Activated CD4-positive, alpha-beta T cell treated with anti-CD3 and anti-CD28 coated beads for 36 hours (primary cell): ENCODE measurements at regions of chr10 and their contacts with region 1.

Region 1: DNA sequence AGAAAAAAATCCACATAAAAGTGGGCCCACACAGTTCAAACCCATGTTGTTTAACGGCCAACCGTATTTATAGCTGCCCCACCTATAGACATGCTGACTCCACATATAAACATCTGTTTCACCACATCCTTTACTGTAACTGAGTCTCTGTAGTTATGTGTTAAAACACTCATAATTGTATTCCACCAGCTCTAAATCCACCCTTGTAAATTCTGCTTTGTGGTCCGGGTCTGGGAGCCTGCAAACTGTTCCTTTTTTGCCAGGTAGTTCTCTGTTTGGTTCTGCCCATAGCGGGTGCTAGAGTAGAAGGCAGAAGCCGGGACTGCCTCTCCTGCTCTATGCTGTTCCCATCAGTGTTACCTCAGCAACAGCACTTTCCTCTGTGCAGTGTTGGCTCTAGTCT is 20.2 kb upstream of the FHIP2A start:
- DNase-seq: peak; percentile 16
- ATAC-seq: peak; percentile 90
- H3K4me3 Mint-ChIP-seq: no peak overlapping the region
- H3K27ac Mint-ChIP-seq: peak overlapping the region; percentile 38
- H3K4me1 Mint-ChIP-seq: peaks cover 17% of the 10 kb centered on the region
- H3K27me3 Mint-ChIP-seq: no peaks in the 10 kb centered on the region

Region 2: GRCh38 chr10:114458955-114459354 is 342.5 kb before region 1 on chr10:
- CTCF ChIA-PET with region 1: no interaction called
- POLR2A ChIA-PET with region 1: no interaction called
- intact Hi-C with region 1: no loop called
- DNase-seq: peak; percentile 64
- ATAC-seq: peak; percentile 63
- H3K4me3 Mint-ChIP-seq: no peak overlapping the region
- H3K27ac Mint-ChIP-seq: peak overlapping the region; percentile 43
- H3K4me1 Mint-ChIP-seq: peaks cover 16% of the 10 kb centered on the region
- H3K27me3 Mint-ChIP-seq: no peaks in the 10 kb centered on the region

Region 3: DNA sequence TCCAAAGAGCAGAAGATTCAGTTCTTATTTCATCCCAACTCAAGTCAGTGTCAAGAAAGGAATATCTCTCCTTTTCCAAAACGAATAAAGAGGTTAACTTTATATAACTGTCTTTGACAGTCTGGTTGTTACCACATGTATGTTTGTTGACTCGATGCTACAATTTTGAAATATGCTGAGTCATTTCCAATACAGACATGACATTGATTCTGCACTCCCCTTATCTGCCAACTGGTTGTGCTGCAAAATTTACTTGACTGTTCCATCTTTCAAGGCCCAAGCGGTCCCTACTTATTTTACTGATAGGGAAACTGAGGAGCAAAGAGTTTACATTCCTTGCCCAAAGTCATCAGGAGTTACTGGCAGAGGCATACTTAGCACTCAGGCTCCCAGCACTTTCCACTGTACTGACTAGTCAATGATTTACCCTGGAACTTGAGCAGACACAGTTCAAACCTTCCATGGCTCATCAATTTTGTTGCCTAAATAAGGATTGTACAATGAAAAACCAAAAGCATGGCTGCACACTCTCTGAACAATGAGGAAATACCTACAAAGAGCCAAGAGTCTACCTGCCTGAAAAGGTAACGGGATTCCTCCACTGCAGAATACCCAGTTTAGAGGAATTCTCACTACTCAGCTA is 196.1 kb before region 1 on chr10:
- CTCF ChIA-PET with region 1: no interaction called
- POLR2A ChIA-PET with region 1: no interaction called
- intact Hi-C with region 1: no loop called
- DNase-seq: no peak
- ATAC-seq: no peak
- H3K4me3 Mint-ChIP-seq: no peak overlapping the region
- H3K27ac Mint-ChIP-seq: no peak overlapping the region
- H3K4me1 Mint-ChIP-seq: peaks cover 12% of the 10 kb centered on the region
- H3K27me3 Mint-ChIP-seq: no peaks in the 10 kb centered on the region

Region 4: DNA sequence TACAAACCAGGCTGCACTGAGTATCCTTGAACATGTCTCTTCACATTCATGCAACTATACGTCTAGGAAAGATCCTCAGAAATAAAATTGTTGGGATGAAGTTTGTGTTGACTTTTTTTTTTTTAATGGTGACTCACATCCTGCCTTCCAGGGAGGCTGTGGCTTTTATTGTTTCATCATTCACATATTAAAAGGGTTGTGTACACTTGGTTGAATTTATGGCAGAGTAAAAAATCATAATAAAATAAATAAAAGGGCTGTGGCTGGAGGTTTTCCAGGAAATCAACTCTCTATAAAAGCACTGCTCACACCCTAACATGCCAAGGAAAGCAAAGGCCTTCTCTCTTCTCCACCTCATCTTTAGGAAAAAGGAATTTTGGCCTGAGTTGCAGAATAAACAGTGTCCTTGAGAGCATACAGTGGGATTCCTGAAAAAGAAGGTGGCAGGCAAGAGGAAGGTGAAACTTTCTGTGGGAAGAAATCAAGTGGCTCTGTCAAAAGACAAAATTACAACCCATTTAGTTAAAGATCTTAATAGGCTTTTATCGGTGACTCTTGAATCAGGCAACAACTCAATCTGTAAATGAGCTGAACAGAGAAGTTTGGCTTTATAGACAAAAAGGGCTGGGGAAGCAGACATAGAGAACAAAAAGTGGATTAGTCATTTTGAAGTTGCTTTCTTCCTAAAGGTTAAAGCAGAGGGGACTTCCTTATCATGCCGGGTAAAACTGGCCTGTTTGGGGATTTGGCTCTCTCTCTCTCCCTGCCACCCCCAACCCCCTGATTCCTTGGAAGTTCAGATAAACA is 21.4 kb before region 1 on chr10:
- CTCF ChIA-PET with region 1: interaction called, 10 read pairs
- POLR2A ChIA-PET with region 1: no interaction called
- intact Hi-C with region 1: no loop called
- DNase-seq: no peak
- ATAC-seq: peak; percentile 57
- H3K4me3 Mint-ChIP-seq: no peak overlapping the region
- H3K27ac Mint-ChIP-seq: peak overlapping the region; percentile 59
- H3K4me1 Mint-ChIP-seq: peaks cover 5% of the 10 kb centered on the region
- H3K27me3 Mint-ChIP-seq: peaks cover 3% of the 10 kb centered on the region

Region 5: GRCh38 chr10:115456822-115457221 is 655.4 kb after region 1 on chr10:
- CTCF ChIA-PET with region 1: no interaction called
- POLR2A ChIA-PET with region 1: no interaction called
- intact Hi-C with region 1: no loop called
- DNase-seq: no peak
- ATAC-seq: no peak
- H3K4me3 Mint-ChIP-seq: no peak overlapping the region
- H3K27ac Mint-ChIP-seq: no peak overlapping the region
- H3K4me1 Mint-ChIP-seq: no peaks in the 10 kb centered on the region
- H3K27me3 Mint-ChIP-seq: no peaks in the 10 kb centered on the region